ENCODE measurements at regions of chr9 and their contacts with region 1.

Region 1: GRCh38 chr9:131253891-131254491 is 22.3 kb downstream of the FAM78A start:
- DNase-seq: no peak
- H3K4me3 Mint-ChIP-seq: peak overlapping the region; percentile 77
- H3K27ac Mint-ChIP-seq: peak overlapping the region; percentile 87
- H3K4me1 Mint-ChIP-seq: peaks cover 41% of the 10 kb centered on the region
- H3K27me3 Mint-ChIP-seq: no peaks in the 10 kb centered on the region

Region 2: DNA sequence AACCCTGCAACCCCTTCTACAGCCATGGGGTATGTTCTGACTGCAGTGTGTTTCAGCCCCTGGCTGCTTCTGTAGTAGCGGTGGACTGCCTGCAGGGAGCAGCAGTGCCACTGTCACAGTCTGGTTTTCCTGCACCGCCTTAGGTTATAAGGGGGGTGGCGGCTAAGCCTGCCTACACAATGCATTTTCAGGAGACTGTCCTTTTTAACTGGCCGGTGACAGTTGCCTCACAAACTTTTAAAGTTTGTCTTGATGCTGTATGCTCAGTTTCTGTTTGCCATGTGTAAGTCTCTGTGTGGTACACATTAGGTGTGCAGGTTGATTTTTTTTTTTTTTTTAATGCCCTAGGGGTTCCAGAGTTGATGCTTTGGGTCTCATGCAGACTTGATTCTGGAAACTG is 75.6 kb before region 1 on chr9:
- CTCF ChIA-PET with region 1: interaction called, 4 read pairs
- intact Hi-C with region 1: loop called (anchors 5 kb)
- DNase-seq: peak; percentile 81
- H3K4me3 Mint-ChIP-seq: no peak overlapping the region
- H3K27ac Mint-ChIP-seq: no peak overlapping the region
- H3K4me1 Mint-ChIP-seq: no peaks in the 10 kb centered on the region
- H3K27me3 Mint-ChIP-seq: no peaks in the 10 kb centered on the region

Region 3: GRCh38 chr9:131237931-131238401 is 16.0 kb before region 1 on chr9:
- CTCF ChIA-PET with region 1: interaction called, 10 read pairs
- intact Hi-C with region 1: loop called (anchors 1 kb)
- DNase-seq: peak; percentile 95
- H3K4me3 Mint-ChIP-seq: peak overlapping the region; percentile 66
- H3K27ac Mint-ChIP-seq: peak overlapping the region; percentile 95
- H3K4me1 Mint-ChIP-seq: peaks cover 34% of the 10 kb centered on the region
- H3K27me3 Mint-ChIP-seq: no peaks in the 10 kb centered on the region

Region 4: GRCh38 chr9:131270171-131271015 is 16.4 kb after region 1 on chr9:
- CTCF ChIA-PET with region 1: interaction called, 12 read pairs
- intact Hi-C with region 1: loop called (anchors 1 kb)
- DNase-seq: peak; percentile 81
- H3K4me3 Mint-ChIP-seq: peak overlapping the region; percentile 96
- H3K27ac Mint-ChIP-seq: peak overlapping the region; percentile 99
- H3K4me1 Mint-ChIP-seq: peaks cover 56% of the 10 kb centered on the region
- H3K27me3 Mint-ChIP-seq: no peaks in the 10 kb centered on the region

Region 5: DNA sequence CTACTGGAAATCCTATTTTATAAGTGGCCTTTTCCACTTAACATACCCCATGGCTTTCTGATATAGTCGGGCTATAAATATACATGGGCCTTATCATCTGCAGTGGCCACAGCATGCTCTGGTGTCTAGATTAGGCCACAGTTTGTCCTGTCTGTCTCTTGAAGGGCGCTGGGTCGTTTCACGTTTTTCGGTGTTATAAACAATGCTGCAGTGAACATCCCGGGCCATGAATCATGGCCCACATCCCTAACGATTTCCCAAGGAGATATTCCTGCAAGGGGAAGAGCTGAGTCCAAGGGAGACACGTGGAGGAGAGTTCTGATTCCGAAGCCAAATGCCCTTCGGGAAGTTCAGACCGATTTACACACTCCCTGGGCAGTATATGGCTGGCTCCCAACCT is 43.9 kb after region 1 on chr9:
- CTCF ChIA-PET with region 1: no interaction called
- intact Hi-C with region 1: no loop called
- DNase-seq: no peak
- H3K4me3 Mint-ChIP-seq: no peak overlapping the region
- H3K27ac Mint-ChIP-seq: no peak overlapping the region
- H3K4me1 Mint-ChIP-seq: no peaks in the 10 kb centered on the region
- H3K27me3 Mint-ChIP-seq: no peaks in the 10 kb centered on the region

Region 6: GRCh38 chr9:131310833-131311554 is 57.0 kb after region 1 on chr9:
- CTCF ChIA-PET with region 1: interaction called, 4 read pairs
- intact Hi-C with region 1: loop called (anchors 2 kb)
- DNase-seq: peak; percentile 89
- H3K4me3 Mint-ChIP-seq: peak overlapping the region; percentile 39
- H3K27ac Mint-ChIP-seq: no peak overlapping the region
- H3K4me1 Mint-ChIP-seq: peaks cover 12% of the 10 kb centered on the region
- H3K27me3 Mint-ChIP-seq: no peaks in the 10 kb centered on the region

Region 7: DNA sequence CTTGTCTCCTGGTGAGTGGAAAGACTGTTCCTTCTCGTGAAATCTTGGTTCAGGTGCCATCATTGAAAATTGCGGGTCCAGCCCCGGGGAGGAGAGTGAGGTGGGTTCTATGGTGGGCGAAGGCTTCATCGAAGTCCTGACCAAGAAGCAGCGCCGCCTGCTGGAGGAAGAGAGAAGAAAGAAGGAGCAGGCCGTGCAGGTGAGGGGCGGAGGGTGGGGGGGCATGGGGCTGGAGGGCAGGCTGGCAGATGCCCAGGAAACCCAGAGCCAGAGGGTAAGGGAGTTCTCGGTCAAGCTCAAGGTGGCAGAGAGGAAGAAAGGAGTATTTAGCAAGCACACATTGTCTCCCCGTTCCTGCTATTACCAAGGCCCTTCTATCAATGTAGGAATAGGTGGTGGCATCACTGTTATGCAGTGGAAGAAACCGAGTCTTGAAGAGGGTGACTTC is 224.5 kb after region 1 on chr9:
- CTCF ChIA-PET with region 1: no interaction called
- intact Hi-C with region 1: no loop called
- DNase-seq: peak; percentile 66
- H3K4me3 Mint-ChIP-seq: no peak overlapping the region
- H3K27ac Mint-ChIP-seq: no peak overlapping the region
- H3K4me1 Mint-ChIP-seq: peaks cover 7% of the 10 kb centered on the region
- H3K27me3 Mint-ChIP-seq: no peaks in the 10 kb centered on the region

Measured in activated naive CD4-positive, alpha-beta T cell treated with anti-CD3 and anti-CD28 coated beads for 36 hours (primary cell).